ENCODE measurements at regions of chr2 and their contacts with region 1.

Region 1: DNA sequence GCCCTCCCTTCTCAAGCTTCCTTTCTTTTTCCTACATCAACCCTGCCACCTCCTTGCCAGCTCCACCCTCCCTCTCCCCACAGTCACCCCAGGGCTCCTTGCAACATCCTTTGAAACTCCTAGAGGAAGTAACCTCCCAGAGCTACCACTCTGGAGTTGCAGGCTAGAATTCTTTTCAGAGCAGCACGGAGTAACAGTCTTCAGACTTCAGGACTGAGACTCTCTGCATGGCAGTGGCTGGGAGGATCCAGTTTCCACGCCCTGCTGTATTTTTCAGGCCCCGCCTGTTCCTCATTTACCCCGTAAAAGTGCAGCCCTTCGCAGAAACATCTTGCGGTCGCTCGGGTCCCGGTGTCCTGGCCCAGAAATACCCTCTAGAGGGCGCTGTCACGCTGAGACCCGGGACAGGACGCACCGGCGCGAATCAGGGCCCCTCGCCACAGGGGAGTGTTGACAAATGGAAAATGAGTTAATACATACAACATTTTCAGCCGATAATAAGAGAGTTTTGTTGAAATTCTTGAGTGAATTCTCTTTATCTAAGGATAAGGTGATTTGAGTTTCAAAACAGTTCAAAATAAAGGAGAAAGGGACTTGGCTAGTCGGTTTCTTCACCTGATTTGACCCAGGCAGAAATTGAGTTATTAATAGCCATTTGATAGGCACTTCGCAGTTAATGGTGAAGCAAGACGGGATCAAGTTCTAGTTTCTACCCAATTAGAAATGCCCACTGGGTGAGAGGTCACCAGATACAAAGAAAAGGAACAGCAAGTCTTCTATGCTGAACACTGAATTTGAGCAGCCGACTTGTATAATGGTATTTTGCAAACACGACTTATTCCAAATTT is 18.5 kb upstream of the NTSR2 start:
- DNase-seq: peak; percentile 70 to 89
- ATAC-seq: peak; percentile 85 to 87 (median 87)
- H3K4me3 ChIP-seq: no peak overlapping the region
- H3K4me3 Mint-ChIP-seq: peak overlapping the region; percentile 35
- H3K27ac ChIP-seq: no peak overlapping the region
- H3K27ac Mint-ChIP-seq: peak overlapping the region in 1 of 2 donors; percentile 51
- H3K4me1 ChIP-seq: peaks cover 11% of the 10 kb centered on the region
- H3K4me1 Mint-ChIP-seq: peaks cover 8 to 16% of the 10 kb centered on the region in 2 donors
- H3K27me3 ChIP-seq: no peaks in the 10 kb centered on the region
- H3K27me3 Mint-ChIP-seq: peaks cover 2 to 13% of the 10 kb centered on the region in 2 donors
- CTCF ChIP-seq: peak; percentile 86

Region 2: GRCh38 chr2:11746376-11746806 is 57.9 kb after region 1 on chr2 and contains the start of gene LPIN1:
- intact Hi-C with region 1: loop called (anchors 5 kb)
- DNase-seq: peak; percentile 86 to 92
- ATAC-seq: peak; percentile 70 to 90 (median 80)
- H3K4me3 ChIP-seq: peak within 1 kb of the TSS; percentile 54
- H3K4me3 Mint-ChIP-seq: peak within 1 kb of the TSS; percentile 95
- H3K27ac ChIP-seq: peak within 1 kb of the TSS; percentile 67
- H3K27ac Mint-ChIP-seq: peak within 1 kb of the TSS; percentile 93 to 94
- H3K4me1 ChIP-seq: peaks cover 73% of the 10 kb centered on the region
- H3K4me1 Mint-ChIP-seq: peaks cover 62 to 64% of the 10 kb centered on the region in 2 donors
- H3K27me3 ChIP-seq: no peaks in the 10 kb centered on the region
- H3K27me3 Mint-ChIP-seq: no peaks in the 10 kb centered on the region
- CTCF ChIP-seq: no peak
- total RNA-seq, gene LPIN1: 95.0 to 122 (median 118) TPM

Measured in natural killer cell (primary cell).